ENCODE measurements at regions of chr10 and their contacts with region 1.

Region 1: GRCh38 chr10:68732651-68733050 is 11.6 kb downstream of the CCAR1 start:
- DNase-seq: no peak

Region 2: DNA sequence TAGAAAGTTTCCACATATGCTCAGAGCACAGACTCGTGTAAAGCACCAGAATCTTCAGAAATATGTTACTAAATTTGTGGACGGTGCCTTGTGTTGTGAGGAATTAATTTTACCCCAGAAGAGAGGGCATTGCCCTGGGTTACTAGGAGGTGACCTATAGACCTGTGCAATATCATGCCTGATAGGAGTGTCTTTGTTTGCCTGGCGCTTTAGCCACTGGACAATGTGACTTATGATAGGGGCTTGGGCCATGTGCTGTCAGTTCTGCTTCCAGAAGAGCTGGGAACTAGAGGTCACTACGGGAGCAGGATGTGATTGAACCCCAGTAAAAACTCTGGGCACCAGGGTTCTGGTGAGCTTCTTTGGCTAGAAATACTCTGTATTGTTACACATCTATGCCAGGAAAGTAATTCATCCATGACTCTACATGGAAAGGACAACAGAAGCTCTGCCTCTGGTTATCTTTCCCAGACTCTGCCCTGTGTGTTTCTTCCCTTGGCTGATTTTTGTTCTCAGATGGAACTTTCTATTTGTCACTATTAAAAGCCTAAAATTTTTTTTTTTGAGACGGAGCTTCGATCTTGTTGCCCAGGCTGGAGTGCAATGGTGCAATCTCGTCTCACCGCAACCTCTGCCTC is 772.7 kb before region 1 on chr10:
- intact Hi-C with region 1: loop called in 1 of 2 experiments (anchors 10 kb)
- DNase-seq: no peak

Measured in posterior vena cava (tissue), 2 donors.